ENCODE measurements at regions of chr2 and their contacts with region 1.

Region 1: GRCh38 chr2:2613279-2614199 is 282.5 kb upstream of the MYT1L start:
- DNase-seq: peak; percentile 69 to 95 (median 91)
- ATAC-seq: peak; percentile 100
- H3K4me3 ChIP-seq: peak overlapping the region; percentile 59
- H3K4me3 Mint-ChIP-seq: peak overlapping the region; percentile 71 to 91 (median 85)
- H3K27ac ChIP-seq: peak overlapping the region; percentile 85
- H3K27ac Mint-ChIP-seq: peak overlapping the region; percentile 69 to 95 (median 93)
- H3K4me1 ChIP-seq: no peaks in the 10 kb centered on the region
- H3K4me1 Mint-ChIP-seq: peaks cover 4 to 16% (median 10%) of the 10 kb centered on the region in 7 donors
- H3K27me3 ChIP-seq: no peaks in the 10 kb centered on the region
- H3K27me3 Mint-ChIP-seq: peaks cover 10 to 19% (median 13%) of the 10 kb centered on the region in 5 donors

Region 2: DNA sequence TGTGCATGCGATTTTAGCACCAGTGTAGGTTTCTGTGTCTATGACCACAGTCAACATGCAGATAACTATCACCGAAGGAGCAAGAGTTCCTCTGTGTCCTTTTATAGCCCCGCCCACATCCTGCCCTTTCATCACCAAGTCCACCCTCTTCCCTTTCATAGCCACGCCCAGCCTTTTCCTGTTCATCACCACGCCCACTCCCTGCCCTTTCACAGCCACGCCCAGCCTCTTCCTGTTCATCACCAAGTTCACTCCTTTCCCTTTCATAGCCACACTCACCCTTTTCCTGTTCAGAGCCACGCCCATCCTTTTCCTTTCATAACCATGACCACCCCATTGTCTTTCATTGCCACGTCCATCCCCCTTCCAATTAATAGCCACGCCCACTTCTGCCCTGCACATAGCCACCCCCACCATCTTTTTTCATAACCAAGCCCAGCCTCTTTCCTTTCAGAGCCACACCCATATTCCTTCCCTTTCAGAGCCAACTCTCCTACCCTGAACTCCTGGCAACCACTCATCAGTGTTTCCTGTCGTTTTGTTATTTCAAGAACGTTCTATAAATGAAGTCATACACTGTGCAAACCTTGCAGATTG is 556.3 kb before region 1 on chr2:
- CTCF ChIA-PET with region 1: no interaction called
- POLR2A ChIA-PET with region 1: interaction called, 3 read pairs
- intact Hi-C with region 1: loop called (anchors 1 to 5 kb)
- DNase-seq: peak in 8 of 9 donors; percentile 45 to 90 (median 76)
- ATAC-seq: peak; percentile 91
- H3K4me3 ChIP-seq: peak overlapping the region; percentile 7
- H3K4me3 Mint-ChIP-seq: peak overlapping the region; percentile 42 to 76 (median 58)
- H3K27ac ChIP-seq: peak overlapping the region; percentile 16
- H3K27ac Mint-ChIP-seq: peak overlapping the region; percentile 54 to 90 (median 81)
- H3K4me1 ChIP-seq: peaks cover 0 to 25% of the 10 kb centered on the region in 2 donors
- H3K4me1 Mint-ChIP-seq: peaks cover 16 to 42% (median 32%) of the 10 kb centered on the region in 7 donors
- H3K27me3 ChIP-seq: no peaks in the 10 kb centered on the region
- H3K27me3 Mint-ChIP-seq: peaks cover 0 to 5% (median 0%) of the 10 kb centered on the region in 5 donors

Region 3: GRCh38 chr2:2464094-2464493 is 149.4 kb before region 1 on chr2:
- CTCF ChIA-PET with region 1: no interaction called
- POLR2A ChIA-PET with region 1: no interaction called
- intact Hi-C with region 1: no loop called
- DNase-seq: no peak
- ATAC-seq: no peak
- H3K4me3 ChIP-seq: no peak overlapping the region
- H3K4me3 Mint-ChIP-seq: no peak overlapping the region
- H3K27ac ChIP-seq: no peak overlapping the region
- H3K27ac Mint-ChIP-seq: no peak overlapping the region
- H3K4me1 ChIP-seq: no peaks in the 10 kb centered on the region
- H3K4me1 Mint-ChIP-seq: no peaks in the 10 kb centered on the region
- H3K27me3 ChIP-seq: no peaks in the 10 kb centered on the region
- H3K27me3 Mint-ChIP-seq: peaks cover 0 to 35% (median 20%) of the 10 kb centered on the region in 5 donors

Region 4: GRCh38 chr2:2623939-2624338 is 10.4 kb after region 1 on chr2:
- CTCF ChIA-PET with region 1: no interaction called
- POLR2A ChIA-PET with region 1: no interaction called
- intact Hi-C with region 1: no loop called
- DNase-seq: no peak
- ATAC-seq: no peak
- H3K4me3 ChIP-seq: no peak overlapping the region
- H3K4me3 Mint-ChIP-seq: no peak overlapping the region
- H3K27ac ChIP-seq: no peak overlapping the region
- H3K27ac Mint-ChIP-seq: no peak overlapping the region
- H3K4me1 ChIP-seq: no peaks in the 10 kb centered on the region
- H3K4me1 Mint-ChIP-seq: no peaks in the 10 kb centered on the region
- H3K27me3 ChIP-seq: no peaks in the 10 kb centered on the region
- H3K27me3 Mint-ChIP-seq: peaks cover 0 to 6% (median 0%) of the 10 kb centered on the region in 5 donors

Region 5: GRCh38 chr2:2681711-2682251 is 68.2 kb after region 1 on chr2:
- CTCF ChIA-PET with region 1: no interaction called
- POLR2A ChIA-PET with region 1: no interaction called
- intact Hi-C with region 1: loop called in 1 of 2 experiments (anchors 1 kb)
- DNase-seq: peak in 7 of 9 donors; percentile 22 to 51 (median 31)
- ATAC-seq: peak; percentile 74
- H3K4me3 ChIP-seq: no peak overlapping the region
- H3K4me3 Mint-ChIP-seq: peak overlapping the region in 8 of 10 donors; percentile 44 to 94 (median 78)
- H3K27ac ChIP-seq: no peak overlapping the region
- H3K27ac Mint-ChIP-seq: peak overlapping the region in 7 of 9 donors; percentile 57 to 94 (median 85)
- H3K4me1 ChIP-seq: peaks cover 0 to 48% of the 10 kb centered on the region in 2 donors
- H3K4me1 Mint-ChIP-seq: peaks cover 12 to 54% (median 53%) of the 10 kb centered on the region in 7 donors
- H3K27me3 ChIP-seq: no peaks in the 10 kb centered on the region
- H3K27me3 Mint-ChIP-seq: peaks cover 0 to 10% (median 0%) of the 10 kb centered on the region in 5 donors

Region 6: GRCh38 chr2:2853346-2853745 is 239.8 kb after region 1 on chr2:
- CTCF ChIA-PET with region 1: no interaction called
- POLR2A ChIA-PET with region 1: no interaction called
- intact Hi-C with region 1: no loop called
- DNase-seq: no peak
- ATAC-seq: no peak
- H3K4me3 ChIP-seq: no peak overlapping the region
- H3K4me3 Mint-ChIP-seq: no peak overlapping the region
- H3K27ac ChIP-seq: no peak overlapping the region
- H3K27ac Mint-ChIP-seq: no peak overlapping the region
- H3K4me1 ChIP-seq: no peaks in the 10 kb centered on the region
- H3K4me1 Mint-ChIP-seq: no peaks in the 10 kb centered on the region
- H3K27me3 ChIP-seq: no peaks in the 10 kb centered on the region
- H3K27me3 Mint-ChIP-seq: no peaks in the 10 kb centered on the region

Region 7: GRCh38 chr2:3379647-3380534 is 766.4 kb after region 1 on chr2 and contains the start of gene TRAPPC12:
- CTCF ChIA-PET with region 1: no interaction called
- POLR2A ChIA-PET with region 1: interaction called, 14 read pairs
- intact Hi-C with region 1: loop called (anchors 1 to 2 kb)
- DNase-seq: peak; percentile 83 to 94 (median 93)
- ATAC-seq: peak; percentile 87
- H3K4me3 ChIP-seq: peak within 1 kb of the TSS; percentile 94
- H3K4me3 Mint-ChIP-seq: peak within 1 kb of the TSS; percentile 96 to 99 (median 98)
- H3K27ac ChIP-seq: peak within 1 kb of the TSS; percentile 87
- H3K27ac Mint-ChIP-seq: peak within 1 kb of the TSS; percentile 94 to 99 (median 99)
- H3K4me1 ChIP-seq: peaks cover 24 to 29% of the 10 kb centered on the region in 2 donors
- H3K4me1 Mint-ChIP-seq: peaks cover 21 to 78% (median 52%) of the 10 kb centered on the region in 7 donors
- H3K27me3 ChIP-seq: no peaks in the 10 kb centered on the region
- H3K27me3 Mint-ChIP-seq: no peaks in the 10 kb centered on the region
- total RNA-seq, gene TRAPPC12: 90.5 to 160 (median 121) TPM

Region 8: GRCh38 chr2:3558205-3559014 is 944.9 kb after region 1 on chr2 and contains the start of gene RNASEH1:
- CTCF ChIA-PET with region 1: no interaction called
- POLR2A ChIA-PET with region 1: no interaction called
- intact Hi-C with region 1: loop called (anchors 1 to 5 kb)
- DNase-seq: peak; percentile 94 to 100 (median 97)
- ATAC-seq: peak; percentile 98
- H3K4me3 ChIP-seq: peak within 1 kb of the TSS; percentile 72
- H3K4me3 Mint-ChIP-seq: peak within 1 kb of the TSS; percentile 86 to 93 (median 92)
- H3K27ac ChIP-seq: peak within 1 kb of the TSS; percentile 98
- H3K27ac Mint-ChIP-seq: peak within 1 kb of the TSS; percentile 90 to 98 (median 96)
- H3K4me1 ChIP-seq: peaks cover 11 to 17% of the 10 kb centered on the region in 2 donors
- H3K4me1 Mint-ChIP-seq: peaks cover 7 to 48% (median 37%) of the 10 kb centered on the region in 7 donors
- H3K27me3 ChIP-seq: no peaks in the 10 kb centered on the region
- H3K27me3 Mint-ChIP-seq: no peaks in the 10 kb centered on the region
- total RNA-seq, gene RNASEH1: 17.6 to 31.2 (median 23.4) TPM